ENCODE measurements at regions of chr19 and their contacts with region 1.

Region 1: DNA sequence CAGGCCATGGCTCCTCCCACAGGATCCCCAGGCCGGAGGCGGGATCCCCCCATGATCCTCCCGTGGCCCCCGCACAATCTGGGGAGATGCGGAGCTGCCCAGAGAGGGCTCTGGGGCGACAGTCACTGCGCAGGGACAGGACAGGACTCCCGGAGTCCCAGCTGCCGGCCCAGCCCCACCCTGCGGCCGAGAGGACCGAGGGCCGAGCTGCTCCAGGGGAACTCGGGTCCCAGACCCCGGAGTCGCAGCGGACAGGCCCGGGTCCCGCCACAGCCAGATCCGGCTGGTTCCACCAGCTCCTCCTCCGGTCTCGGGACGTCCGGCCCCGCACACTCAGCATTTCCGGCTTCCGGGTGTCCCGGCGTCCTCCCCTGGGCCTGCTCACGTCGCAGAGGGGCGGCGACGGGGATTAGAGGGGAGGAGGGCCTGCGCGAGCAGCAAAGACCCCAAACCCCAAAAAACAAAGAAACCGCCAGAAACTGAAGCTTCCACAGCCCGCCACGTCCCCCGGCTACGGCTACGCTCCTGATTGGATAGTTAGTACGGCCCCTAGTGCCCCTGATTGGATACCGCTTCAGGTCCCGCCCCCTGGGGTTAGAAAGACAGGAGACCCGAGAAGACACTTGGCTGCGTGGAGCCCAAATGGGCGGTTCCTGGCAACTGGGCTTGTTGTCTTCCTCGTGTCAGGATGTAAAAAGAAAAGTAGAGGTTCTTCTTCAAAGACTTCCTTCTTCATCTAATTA is 21.3 kb upstream of the OR10H1 start:
- DNase-seq: peak; percentile 90
- H3K4me3 Mint-ChIP-seq: peak overlapping the region; percentile 67
- H3K27ac Mint-ChIP-seq: no peak overlapping the region
- H3K4me1 Mint-ChIP-seq: peaks cover 33% of the 10 kb centered on the region
- H3K27me3 Mint-ChIP-seq: peaks cover 25% of the 10 kb centered on the region
- CTCF ChIP-seq: no peak

Region 2: GRCh38 chr19:15885167-15885566 is 48.4 kb after region 1 on chr19:
- CTCF ChIA-PET with region 1: no interaction called
- intact Hi-C with region 1: no loop called
- DNase-seq: no peak
- H3K4me3 Mint-ChIP-seq: no peak overlapping the region
- H3K27ac Mint-ChIP-seq: no peak overlapping the region
- H3K4me1 Mint-ChIP-seq: no peaks in the 10 kb centered on the region
- H3K27me3 Mint-ChIP-seq: peaks cover 13% of the 10 kb centered on the region
- CTCF ChIP-seq: no peak

Region 3: DNA sequence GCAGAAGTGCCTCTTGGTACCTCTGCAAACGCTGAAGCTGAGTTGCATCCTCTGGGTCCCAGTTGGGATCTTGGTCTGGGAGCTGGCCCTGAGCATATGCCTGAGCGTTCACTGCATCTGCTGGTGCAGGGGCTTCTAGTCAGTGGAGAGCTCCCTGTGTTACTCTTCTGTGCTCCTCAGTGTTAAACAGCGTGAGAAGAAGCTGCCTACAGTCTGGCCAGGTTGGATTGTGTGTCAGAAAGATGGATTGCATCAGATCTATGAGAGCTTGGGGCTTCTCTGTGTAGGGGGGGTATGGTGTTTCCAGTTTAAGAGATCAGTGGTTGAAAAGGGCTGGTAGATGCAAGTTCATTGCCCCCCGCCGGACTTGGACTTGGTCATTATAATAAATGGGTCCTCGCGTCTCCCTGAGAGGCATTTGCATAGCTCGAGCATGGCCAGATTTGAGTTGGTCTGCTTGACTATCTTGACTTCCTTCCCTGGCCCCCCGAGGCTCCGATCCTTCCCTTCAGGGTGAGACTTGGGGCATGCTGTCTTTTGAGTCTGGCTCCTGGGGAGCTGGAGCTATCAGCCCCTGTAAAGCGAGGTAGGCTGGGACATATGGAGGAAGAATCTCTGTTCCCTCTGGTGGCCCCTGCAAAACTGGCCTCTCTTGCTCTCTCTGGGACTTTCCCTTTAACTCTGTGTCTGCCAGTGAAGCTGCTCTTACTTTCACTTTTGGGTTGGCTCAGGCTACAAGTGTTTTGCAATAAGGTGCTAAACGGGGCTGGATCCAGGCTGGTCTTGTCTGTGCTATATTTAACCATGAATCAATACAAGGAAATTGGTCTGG is 164.9 kb after region 1 on chr19:
- CTCF ChIA-PET with region 1: no interaction called
- intact Hi-C with region 1: loop called (anchors 10 kb)
- DNase-seq: peak; percentile 58
- H3K4me3 Mint-ChIP-seq: peak overlapping the region; percentile 35
- H3K27ac Mint-ChIP-seq: peak overlapping the region; percentile 16
- H3K4me1 Mint-ChIP-seq: peaks cover 30% of the 10 kb centered on the region
- H3K27me3 Mint-ChIP-seq: no peaks in the 10 kb centered on the region
- CTCF ChIP-seq: no peak

Measured in Calu3 (cell line).